Activated CD8-positive, alpha-beta T cell treated with anti-CD3 and anti-CD28 coated beads, Interleukin-2, amount 10 ng/mL, durations not matched to agents 7 days and 5 days (primary cell): ENCODE measurements at regions of chr11 and their contacts with region 1.

Region 1: DNA sequence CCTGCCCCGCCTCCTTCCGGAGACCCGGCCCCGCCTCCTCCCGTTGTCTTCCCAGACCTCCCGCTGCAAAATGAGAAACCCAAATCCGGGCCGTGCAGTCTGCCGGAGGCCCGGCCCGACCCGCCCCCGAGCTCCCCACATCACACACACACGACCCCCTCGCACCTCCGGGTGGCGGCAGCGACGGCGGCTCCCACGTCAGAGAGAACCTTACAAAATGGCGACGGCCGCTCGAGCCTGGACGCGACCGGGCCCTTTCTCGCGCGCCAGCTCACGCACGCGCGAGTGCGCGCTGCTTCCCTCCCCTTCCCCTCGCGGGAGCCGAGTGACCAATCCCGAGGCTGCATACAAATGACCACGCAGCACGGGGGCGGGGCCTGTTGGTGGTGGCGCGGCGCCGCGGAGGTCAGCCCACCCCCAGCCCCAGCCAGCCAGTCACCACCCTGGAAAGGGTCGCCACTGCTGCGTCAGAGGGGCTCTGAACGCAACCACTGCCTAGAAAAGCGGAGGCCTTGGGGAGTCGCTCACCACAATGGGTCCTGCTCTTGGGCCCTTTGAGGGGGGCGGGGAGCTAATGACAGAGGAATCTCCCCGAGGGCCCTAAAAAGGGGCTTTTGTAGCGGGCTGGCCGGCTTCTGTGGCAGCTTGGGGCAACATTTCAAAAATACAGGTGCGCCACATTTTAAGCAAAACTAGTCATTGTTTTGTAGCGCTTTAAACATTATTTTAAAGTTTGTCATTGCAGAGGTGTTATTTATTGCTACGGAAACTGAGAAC is at the start of gene RBM4B:
- DNase-seq: peak; percentile 96
- ATAC-seq: peak; percentile 89
- H3K4me3 Mint-ChIP-seq: peak within 1 kb of the TSS; percentile 95
- H3K27ac Mint-ChIP-seq: peak within 1 kb of the TSS; percentile 99
- H3K4me1 Mint-ChIP-seq: peaks cover 35% of the 10 kb centered on the region
- H3K27me3 Mint-ChIP-seq: no peaks in the 10 kb centered on the region
- total RNA-seq, gene RBM4B: 18.7 to 21.5 TPM

Region 2: GRCh38 chr11:66386171-66387069 is 291.4 kb before region 1 on chr11:
- CTCF ChIA-PET with region 1: interaction called, 17 read pairs
- POLR2A ChIA-PET with region 1: no interaction called
- DNase-seq: peak; percentile 91
- ATAC-seq: peak; percentile 71
- H3K4me3 Mint-ChIP-seq: peak overlapping the region; percentile 20
- H3K27ac Mint-ChIP-seq: no peak overlapping the region
- H3K4me1 Mint-ChIP-seq: peaks cover 11% of the 10 kb centered on the region
- H3K27me3 Mint-ChIP-seq: no peaks in the 10 kb centered on the region

Region 3: DNA sequence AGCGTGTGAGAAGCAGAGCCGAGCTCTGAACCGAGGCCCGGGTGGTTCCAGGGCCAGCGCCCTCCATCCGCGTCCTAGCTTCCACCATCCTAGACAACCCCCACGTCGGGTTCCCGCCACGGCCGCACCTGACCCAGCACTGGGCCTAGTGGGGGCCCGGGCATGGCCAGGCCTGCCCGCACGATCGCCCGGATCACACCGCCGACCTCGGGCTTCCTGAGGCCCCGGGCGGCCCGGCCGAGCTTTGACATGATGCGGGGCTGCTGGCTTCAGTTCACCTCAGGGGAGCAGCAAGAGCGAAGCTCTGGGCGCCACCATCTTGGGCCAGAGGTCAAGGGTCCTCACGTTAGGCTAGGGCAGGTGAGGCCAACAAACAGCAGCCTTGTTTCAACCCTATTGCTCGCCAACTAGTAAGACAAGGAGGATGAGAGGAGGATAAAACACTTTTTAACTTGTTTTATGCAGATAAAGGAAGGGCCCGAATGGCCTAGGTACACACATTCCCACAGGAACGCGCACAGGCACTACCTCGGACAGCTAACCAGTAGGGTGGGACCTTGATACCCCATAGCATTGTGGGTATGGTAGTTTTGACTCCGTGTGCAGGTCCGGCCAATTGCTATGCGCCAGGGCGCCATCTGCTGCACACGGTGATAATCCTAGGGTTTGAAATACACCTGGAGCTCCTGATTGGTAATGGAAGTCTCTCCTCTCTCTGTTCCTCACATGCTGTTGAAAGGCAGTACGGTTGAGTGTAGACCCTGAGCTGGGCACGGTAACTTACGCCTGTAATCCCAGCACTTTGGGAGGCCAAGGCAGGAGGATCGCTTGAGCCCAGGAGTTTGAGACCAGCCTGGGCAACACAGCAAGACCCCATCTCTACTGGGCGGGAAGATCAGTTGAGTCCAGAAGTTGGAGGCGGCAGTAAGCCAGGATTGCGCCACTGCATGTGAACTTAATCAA is 239.0 kb before region 1 on chr11 and contains the start of gene MRPL11:
- CTCF ChIA-PET with region 1: interaction called, 33 read pairs
- POLR2A ChIA-PET with region 1: interaction called, 4 read pairs
- DNase-seq: peak; percentile 93
- ATAC-seq: peak; percentile 97
- H3K4me3 Mint-ChIP-seq: peak within 1 kb of the TSS; percentile 91
- H3K27ac Mint-ChIP-seq: peak within 1 kb of the TSS; percentile 98
- H3K4me1 Mint-ChIP-seq: peaks cover 19% of the 10 kb centered on the region
- H3K27me3 Mint-ChIP-seq: no peaks in the 10 kb centered on the region
- total RNA-seq, gene MRPL11: 93.7 to 100 TPM

Region 4: DNA sequence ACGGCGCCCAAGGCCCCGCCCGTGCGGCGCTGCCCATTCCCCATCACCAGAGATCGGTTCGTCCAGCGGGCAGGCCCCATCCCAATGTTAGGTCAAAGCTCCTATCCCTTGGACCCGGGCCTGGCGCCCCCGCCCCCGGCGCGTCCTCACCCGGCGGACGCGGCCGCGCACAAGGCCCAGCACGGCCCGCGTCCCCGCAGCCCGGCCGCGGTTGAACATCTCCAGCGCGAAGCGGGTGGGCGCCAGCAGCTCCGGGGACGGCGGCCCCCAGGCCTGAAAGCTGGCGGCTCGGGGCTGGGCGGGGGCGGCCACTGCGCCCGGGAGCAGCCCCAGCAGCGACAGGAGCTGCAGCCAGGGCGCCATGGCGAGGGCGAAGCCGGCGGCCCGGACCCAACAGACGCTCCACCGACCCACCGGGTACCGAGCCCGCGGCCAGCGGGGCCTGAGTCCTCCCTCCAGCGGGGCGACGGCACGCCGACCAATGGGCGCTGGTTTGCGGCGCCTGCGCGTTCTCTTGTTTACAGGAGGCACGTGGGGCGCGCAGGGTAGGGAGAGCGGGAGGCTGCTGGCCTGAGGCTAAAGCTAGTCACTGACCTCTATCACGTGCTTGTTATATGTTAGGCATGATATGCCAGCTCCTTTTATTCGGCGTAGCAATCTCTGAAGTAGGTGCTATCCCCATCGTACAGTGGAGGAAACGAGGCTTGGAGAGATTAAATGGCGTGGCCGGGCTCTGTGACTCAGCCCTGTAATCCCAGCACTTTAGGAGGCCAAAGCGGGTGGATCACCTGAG is 109.5 kb before region 1 on chr11 and contains the start of gene CTSF:
- CTCF ChIA-PET with region 1: interaction called, 18 read pairs
- POLR2A ChIA-PET with region 1: no interaction called
- DNase-seq: peak; percentile 69
- ATAC-seq: peak; percentile 93
- H3K4me3 Mint-ChIP-seq: peak within 1 kb of the TSS; percentile 62
- H3K27ac Mint-ChIP-seq: no peak within 1 kb of the TSS
- H3K4me1 Mint-ChIP-seq: peaks cover 3% of the 10 kb centered on the region
- H3K27me3 Mint-ChIP-seq: peaks cover 28% of the 10 kb centered on the region
- total RNA-seq, gene CTSF: 0.70 to 0.90 TPM

Region 5: DNA sequence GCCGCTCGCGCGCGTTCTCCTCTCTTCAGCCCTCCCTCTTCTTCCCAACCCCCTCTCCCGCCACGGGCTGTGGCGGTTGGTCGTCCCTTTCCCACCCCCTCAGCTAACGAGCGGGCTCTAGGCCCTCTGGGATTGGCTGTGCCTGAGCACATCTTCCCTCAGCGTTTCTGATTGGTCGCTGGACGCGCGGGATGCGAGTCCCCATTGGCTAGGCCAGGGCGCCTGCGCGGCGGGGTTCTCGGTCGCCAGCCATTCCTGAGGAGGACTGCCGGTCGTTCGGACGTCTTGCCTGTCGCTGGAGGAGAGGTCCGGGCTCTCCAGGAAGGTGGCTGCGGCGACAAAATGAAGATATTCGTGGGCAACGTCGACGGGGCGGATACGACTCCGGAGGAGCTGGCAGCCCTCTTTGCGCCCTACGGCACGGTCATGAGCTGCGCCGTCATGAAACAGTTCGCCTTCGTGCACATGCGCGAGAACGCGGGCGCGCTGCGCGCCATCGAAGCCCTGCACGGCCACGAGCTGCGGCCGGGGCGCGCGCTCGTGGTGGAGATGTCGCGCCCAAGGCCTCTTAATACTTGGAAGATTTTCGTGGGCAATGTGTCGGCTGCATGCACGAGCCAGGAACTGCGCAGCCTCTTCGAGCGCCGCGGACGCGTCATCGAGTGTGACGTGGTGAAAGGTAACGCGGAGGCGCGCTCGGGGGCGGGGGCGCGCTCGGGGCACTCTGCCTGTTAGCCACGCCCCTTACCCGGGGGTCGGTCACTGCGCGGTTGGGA is 61.2 kb before region 1 on chr11 and contains the start of gene RBM14:
- CTCF ChIA-PET with region 1: interaction called, 16 read pairs
- POLR2A ChIA-PET with region 1: interaction called, 20 read pairs
- DNase-seq: peak; percentile 99
- ATAC-seq: peak; percentile 92
- H3K4me3 Mint-ChIP-seq: peak within 1 kb of the TSS; percentile 98
- H3K27ac Mint-ChIP-seq: peak within 1 kb of the TSS; percentile 99
- H3K4me1 Mint-ChIP-seq: peaks cover 36% of the 10 kb centered on the region
- H3K27me3 Mint-ChIP-seq: no peaks in the 10 kb centered on the region
- total RNA-seq, gene RBM14: 168 to 182 TPM

Region 6: DNA sequence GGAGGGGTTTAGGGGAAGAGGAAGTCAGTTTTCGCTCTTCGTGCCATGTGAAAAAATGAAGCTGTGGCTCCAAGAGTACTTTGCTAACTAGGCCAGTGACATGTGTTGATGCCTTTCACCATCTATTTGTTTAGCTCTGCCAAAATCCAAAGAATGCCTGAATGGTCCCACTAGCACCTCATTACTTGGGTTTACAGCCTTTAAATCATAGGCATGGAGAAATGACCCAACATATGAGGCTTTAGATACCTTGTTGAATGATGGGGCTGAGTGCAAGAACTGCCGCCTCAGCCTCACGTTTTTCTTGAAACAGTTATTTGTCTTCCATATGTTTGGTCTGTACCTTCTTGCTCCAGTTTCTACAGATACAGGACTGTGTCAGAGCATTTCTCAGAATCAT is 31.0 kb before region 1 on chr11:
- CTCF ChIA-PET with region 1: interaction called, 11 read pairs
- POLR2A ChIA-PET with region 1: interaction called, 5 read pairs
- DNase-seq: no peak
- ATAC-seq: no peak
- H3K4me3 Mint-ChIP-seq: no peak overlapping the region
- H3K27ac Mint-ChIP-seq: peak overlapping the region; percentile 12
- H3K4me1 Mint-ChIP-seq: peaks cover 59% of the 10 kb centered on the region
- H3K27me3 Mint-ChIP-seq: no peaks in the 10 kb centered on the region

Region 7: DNA sequence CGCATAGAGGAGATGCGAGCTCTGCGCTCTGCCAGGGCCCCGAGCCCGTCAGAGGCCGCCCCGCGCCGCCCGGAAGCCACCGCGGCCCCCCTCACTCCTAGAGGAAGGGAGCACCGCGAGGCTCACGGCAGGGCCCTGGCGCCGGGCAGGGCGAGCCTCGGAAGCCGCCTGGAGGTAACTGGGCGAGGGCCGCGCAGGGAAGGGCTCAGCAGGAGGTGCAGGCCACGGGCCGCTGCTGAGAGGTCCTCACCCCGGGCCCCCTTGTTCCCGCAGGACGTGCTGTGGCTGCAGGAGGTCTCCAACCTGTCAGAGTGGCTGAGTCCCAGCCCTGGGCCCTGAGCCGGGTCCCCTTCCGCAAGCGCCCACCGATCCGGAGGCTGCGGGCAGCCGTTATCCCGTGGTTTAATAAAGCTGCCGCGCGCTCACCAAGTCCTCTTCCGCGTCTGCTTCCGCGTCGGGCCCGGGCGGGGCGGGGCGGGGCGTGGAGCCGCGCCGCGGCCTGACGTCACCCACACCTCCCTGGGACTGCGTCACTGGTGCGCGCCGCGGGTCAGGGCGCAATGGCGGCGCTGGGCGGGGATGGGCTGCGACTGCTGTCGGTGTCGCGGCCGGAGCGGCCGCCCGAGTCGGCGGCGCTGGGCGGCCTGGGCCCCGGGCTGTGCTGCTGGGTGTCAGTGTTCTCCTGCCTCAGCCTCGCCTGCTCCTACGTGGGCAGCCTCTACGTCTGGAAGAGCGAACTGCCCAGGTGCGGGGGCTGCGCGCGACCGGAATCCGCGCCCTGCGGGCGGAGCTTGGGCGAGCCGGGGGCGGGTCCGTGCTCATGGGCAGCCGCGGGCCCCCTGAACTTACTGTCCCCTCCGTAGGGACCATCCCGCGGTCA is 165.3 kb after region 1 on chr11 and contains the start of gene RCE1:
- CTCF ChIA-PET with region 1: interaction called, 13 read pairs
- POLR2A ChIA-PET with region 1: interaction called, 17 read pairs
- DNase-seq: peak; percentile 93
- ATAC-seq: peak; percentile 87
- H3K4me3 Mint-ChIP-seq: peak within 1 kb of the TSS; percentile 93
- H3K27ac Mint-ChIP-seq: peak within 1 kb of the TSS; percentile 94
- H3K4me1 Mint-ChIP-seq: peaks cover 55% of the 10 kb centered on the region
- H3K27me3 Mint-ChIP-seq: no peaks in the 10 kb centered on the region
- total RNA-seq, gene RCE1: 23.1 to 27.3 TPM